Activated T-helper 1 cell treated with anti-CD3 and anti-CD28 coated beads, Interleukin-12 subunit alpha, Interleukin-12 subunit beta, Interleukin-2, Interleukin-4 antibody, amounts not matched to agents 30 ng/mL and 10 ng/mL and 1 ng/mL, durations not matched to agents 14 hours and 24 hours and 36 hours (primary cell): ENCODE measurements at regions of chr4 and their contacts with region 1.

Region 1: DNA sequence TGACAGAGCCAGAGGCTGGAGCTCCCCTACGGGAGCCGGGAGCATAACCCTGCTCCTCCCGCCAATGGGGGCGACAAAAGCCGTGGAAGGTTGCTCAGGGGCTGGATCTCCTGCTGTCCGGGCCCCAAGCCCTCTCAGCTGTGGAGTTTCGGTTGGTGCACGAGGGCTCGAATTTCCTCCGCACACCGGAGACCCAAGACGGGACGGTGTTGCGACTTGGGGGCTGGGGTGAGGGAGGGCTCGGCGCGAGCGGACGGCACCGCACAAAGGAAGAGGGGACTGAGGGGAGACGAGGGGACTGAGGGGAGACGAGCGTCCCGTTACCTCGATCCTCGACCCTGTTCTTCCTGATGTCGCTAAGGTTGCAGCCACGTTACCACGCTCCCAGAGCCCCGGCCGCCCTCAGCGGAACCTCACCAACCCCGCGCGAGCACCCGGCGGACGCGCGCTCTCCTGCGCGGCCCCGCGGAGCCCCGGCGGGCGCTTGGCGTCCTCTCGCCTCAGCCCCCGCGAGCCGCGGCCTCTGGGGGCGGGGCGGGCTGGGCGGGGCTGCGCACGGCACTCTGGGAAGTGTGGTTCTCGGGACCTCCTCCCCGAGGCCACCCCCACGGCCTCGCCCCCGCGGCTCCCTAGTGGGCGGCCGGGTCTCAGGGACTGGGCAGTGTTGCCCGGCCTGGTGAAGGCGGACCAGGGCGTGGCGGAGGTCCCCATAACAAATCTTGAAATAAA is at the start of gene KLHL8:
- DNase-seq: peak; percentile 89
- H3K4me3 Mint-ChIP-seq: peak within 1 kb of the TSS; percentile 89
- H3K27ac Mint-ChIP-seq: peak within 1 kb of the TSS; percentile 88
- H3K4me1 Mint-ChIP-seq: peaks cover 18% of the 10 kb centered on the region
- H3K27me3 Mint-ChIP-seq: peaks cover 19% of the 10 kb centered on the region
- total RNA-seq, gene KLHL8: 15.1 and 17.6 TPM in 2 replicates

Region 2: GRCh38 chr4:86593688-86594558 is 626.3 kb before region 1 on chr4 and contains the start of gene PTPN13:
- intact Hi-C with region 1: loop called (anchors 2 kb)
- DNase-seq: peak; percentile 45
- H3K4me3 Mint-ChIP-seq: peak within 1 kb of the TSS; percentile 74
- H3K27ac Mint-ChIP-seq: peak within 1 kb of the TSS; percentile 69
- H3K4me1 Mint-ChIP-seq: peaks cover 8% of the 10 kb centered on the region
- H3K27me3 Mint-ChIP-seq: peaks cover 47% of the 10 kb centered on the region
- total RNA-seq, gene PTPN13: 0.44 and 0.66 TPM in 2 replicates

Region 3: GRCh38 chr4:87103691-87104187 is 116.5 kb before region 1 on chr4:
- intact Hi-C with region 1: loop called (anchors 5 kb)
- DNase-seq: no peak
- H3K4me3 Mint-ChIP-seq: peak overlapping the region; percentile 19
- H3K27ac Mint-ChIP-seq: peak overlapping the region; percentile 29
- H3K4me1 Mint-ChIP-seq: peaks cover 19% of the 10 kb centered on the region
- H3K27me3 Mint-ChIP-seq: no peaks in the 10 kb centered on the region

Region 4: GRCh38 chr4:87209696-87210095 is 10.6 kb before region 1 on chr4:
- intact Hi-C with region 1: loop called (anchors 1 kb)
- DNase-seq: no peak
- H3K4me3 Mint-ChIP-seq: peak overlapping the region; percentile 43
- H3K27ac Mint-ChIP-seq: no peak overlapping the region
- H3K4me1 Mint-ChIP-seq: peaks cover 8% of the 10 kb centered on the region
- H3K27me3 Mint-ChIP-seq: no peaks in the 10 kb centered on the region

Region 5: DNA sequence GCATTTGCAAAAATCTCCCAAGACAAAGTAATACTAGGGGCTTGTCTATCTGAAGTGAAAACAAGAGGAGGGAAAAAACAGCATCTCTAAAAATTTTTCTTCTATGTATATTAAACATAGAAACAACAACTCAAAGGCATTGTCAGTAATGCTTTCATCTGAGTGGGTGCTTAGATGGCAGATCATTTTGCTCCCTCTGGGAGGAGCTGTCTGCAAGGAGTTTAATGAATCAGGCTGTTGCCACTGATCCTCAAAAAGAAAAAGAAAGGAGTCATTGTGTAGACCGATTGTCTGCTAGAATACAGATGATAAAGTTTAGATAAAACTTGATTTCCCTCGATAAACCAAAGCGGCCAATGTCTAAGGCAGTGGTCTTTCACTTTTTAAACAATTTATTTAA is 49.9 kb after region 1 on chr4:
- intact Hi-C with region 1: no loop called
- DNase-seq: no peak
- H3K4me3 Mint-ChIP-seq: no peak overlapping the region
- H3K27ac Mint-ChIP-seq: no peak overlapping the region
- H3K4me1 Mint-ChIP-seq: no peaks in the 10 kb centered on the region
- H3K27me3 Mint-ChIP-seq: peaks cover 5% of the 10 kb centered on the region

Region 6: GRCh38 chr4:87390891-87391575 is 170.8 kb after region 1 on chr4 and contains the start of gene HSD17B11:
- intact Hi-C with region 1: loop called (anchors 2 kb)
- DNase-seq: peak; percentile 74
- H3K4me3 Mint-ChIP-seq: peak within 1 kb of the TSS; percentile 94
- H3K27ac Mint-ChIP-seq: peak within 1 kb of the TSS; percentile 85
- H3K4me1 Mint-ChIP-seq: peaks cover 44% of the 10 kb centered on the region
- H3K27me3 Mint-ChIP-seq: peaks cover 8% of the 10 kb centered on the region
- total RNA-seq, gene HSD17B11: 12.1 and 12.7 TPM in 2 replicates